A673 (cell line): ENCODE measurements at regions of chr2 and their contacts with region 1.

Region 1: DNA sequence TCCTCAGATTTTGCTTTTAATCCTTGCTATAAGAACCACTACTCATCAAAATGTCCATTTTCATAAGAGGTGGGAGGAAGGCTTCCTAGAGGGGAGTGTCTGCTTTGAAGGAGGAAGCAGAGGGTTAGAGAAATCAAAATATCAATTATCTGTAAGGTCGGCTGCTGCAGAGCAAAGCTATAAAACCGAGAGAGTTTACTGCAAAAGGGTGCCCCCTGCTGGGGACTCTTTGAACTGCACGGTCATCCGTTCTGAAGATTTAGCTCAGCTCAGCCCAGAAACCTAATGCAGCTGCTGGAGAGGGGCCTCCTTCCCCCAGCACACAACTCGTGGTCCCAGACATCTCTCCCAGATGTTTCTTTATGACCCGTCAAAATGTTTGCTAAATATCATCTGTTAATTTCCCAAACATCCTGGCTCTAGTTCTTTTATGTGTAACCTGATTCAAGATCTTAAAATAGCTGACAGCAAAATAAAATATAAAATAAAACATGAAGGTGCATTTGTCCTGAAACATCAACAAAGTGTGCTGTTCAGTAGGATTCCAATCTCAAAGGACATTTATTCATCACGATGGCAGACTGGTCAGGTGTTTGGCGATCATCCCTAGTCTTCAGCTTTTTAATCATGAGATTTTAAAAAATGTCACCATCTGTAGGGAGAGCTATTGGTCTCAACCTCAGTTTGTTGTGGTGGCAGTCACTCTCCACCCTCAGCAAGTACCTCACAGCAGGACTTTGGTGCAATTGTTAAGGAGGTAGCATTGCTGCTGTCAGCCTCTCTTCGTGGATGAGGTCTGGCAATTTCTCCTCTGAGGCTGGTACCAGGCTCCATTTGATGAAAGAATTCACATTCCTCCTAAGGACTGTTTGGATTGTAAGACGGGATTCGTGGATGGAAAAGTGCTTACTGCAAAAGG is 185.9 kb downstream of the MTX2 start:
- DNase-seq: peak; percentile 85
- H3K4me3 ChIP-seq: no peak overlapping the region
- H3K27ac ChIP-seq: no peak overlapping the region
- H3K4me1 ChIP-seq: peaks cover 14% of the 10 kb centered on the region
- H3K27me3 ChIP-seq: no peaks in the 10 kb centered on the region
- CTCF ChIP-seq: peak; percentile 91

Region 2: GRCh38 chr2:176140513-176141317 is 314.4 kb before region 1 on chr2:
- CTCF ChIA-PET with region 1: interaction called, 35 read pairs
- POLR2A ChIA-PET with region 1: interaction called, 8 read pairs
- intact Hi-C with region 1: loop called (anchors 2 kb)
- DNase-seq: peak; percentile 94
- H3K4me3 ChIP-seq: peak overlapping the region; percentile 85
- H3K27ac ChIP-seq: peak overlapping the region; percentile 61
- H3K4me1 ChIP-seq: peaks cover 34% of the 10 kb centered on the region
- H3K27me3 ChIP-seq: no peaks in the 10 kb centered on the region
- CTCF ChIP-seq: peak; percentile 94

Region 3: DNA sequence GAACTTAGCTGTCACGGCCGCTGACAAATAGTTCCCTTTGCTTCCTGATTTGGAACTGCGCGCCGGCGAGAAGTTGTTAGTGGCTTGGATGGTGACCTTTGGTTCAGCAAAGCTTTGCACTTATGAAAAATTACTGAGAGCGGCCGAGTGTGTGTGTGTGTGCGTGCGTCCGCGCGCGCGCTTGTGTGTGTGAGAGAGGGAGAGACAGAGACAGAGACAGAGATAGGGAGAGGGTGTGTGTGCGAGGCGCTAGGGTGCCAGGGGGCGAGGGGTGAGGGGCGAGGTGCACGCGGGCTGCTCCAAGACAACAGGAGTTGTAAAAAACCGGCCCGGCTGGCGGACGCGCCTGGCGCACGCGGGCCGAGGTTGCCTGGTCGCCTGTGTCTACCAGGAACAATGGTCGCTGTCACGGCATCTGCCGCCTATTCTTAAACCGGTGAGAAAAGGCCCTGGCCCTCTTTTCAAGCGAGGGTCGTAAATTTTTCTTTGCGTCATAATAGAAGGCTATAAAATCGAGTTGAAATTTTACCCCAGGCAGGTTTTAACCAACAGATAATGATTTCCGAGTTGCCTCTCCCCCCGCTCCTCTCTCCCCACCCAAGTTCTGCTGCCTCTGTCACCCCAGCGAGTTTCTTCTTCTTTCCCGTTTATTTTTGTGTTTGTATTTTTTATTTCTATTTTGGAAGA is 297.5 kb before region 1 on chr2:
- CTCF ChIA-PET with region 1: interaction called, 6 read pairs
- POLR2A ChIA-PET with region 1: no interaction called
- intact Hi-C with region 1: loop called (anchors 5 kb)
- DNase-seq: peak; percentile 61
- H3K4me3 ChIP-seq: peak overlapping the region; percentile 48
- H3K27ac ChIP-seq: peak overlapping the region; percentile 85
- H3K4me1 ChIP-seq: peaks cover 28% of the 10 kb centered on the region
- H3K27me3 ChIP-seq: no peaks in the 10 kb centered on the region
- CTCF ChIP-seq: no peak

Region 4: GRCh38 chr2:176291809-176292283 is 163.3 kb before region 1 on chr2:
- CTCF ChIA-PET with region 1: interaction called, 11 read pairs
- POLR2A ChIA-PET with region 1: no interaction called
- intact Hi-C with region 1: no loop called
- DNase-seq: no peak
- H3K4me3 ChIP-seq: no peak overlapping the region
- H3K27ac ChIP-seq: no peak overlapping the region
- H3K4me1 ChIP-seq: peaks cover 14% of the 10 kb centered on the region
- H3K27me3 ChIP-seq: no peaks in the 10 kb centered on the region
- CTCF ChIP-seq: no peak

Region 5: GRCh38 chr2:176554101-176555048 is 99.2 kb after region 1 on chr2:
- CTCF ChIA-PET with region 1: interaction called, 28 read pairs
- POLR2A ChIA-PET with region 1: no interaction called
- intact Hi-C with region 1: loop called (anchors 2 kb)
- DNase-seq: peak; percentile 86
- H3K4me3 ChIP-seq: peak overlapping the region; percentile 53
- H3K27ac ChIP-seq: peak overlapping the region; percentile 80
- H3K4me1 ChIP-seq: peaks cover 19% of the 10 kb centered on the region
- H3K27me3 ChIP-seq: no peaks in the 10 kb centered on the region
- CTCF ChIP-seq: peak; percentile 82

Region 6: GRCh38 chr2:176638167-176639015 is 183.2 kb after region 1 on chr2:
- CTCF ChIA-PET with region 1: interaction called, 11 read pairs
- POLR2A ChIA-PET with region 1: no interaction called
- intact Hi-C with region 1: loop called (anchors 5 kb)
- DNase-seq: peak; percentile 88
- H3K4me3 ChIP-seq: peak overlapping the region; percentile 76
- H3K27ac ChIP-seq: peak overlapping the region; percentile 89
- H3K4me1 ChIP-seq: peaks cover 36% of the 10 kb centered on the region
- H3K27me3 ChIP-seq: no peaks in the 10 kb centered on the region
- CTCF ChIP-seq: peak; percentile 78